Sciatic nerve (tissue), 2 donors: ENCODE measurements at regions of chr20 and their contacts with region 1.

Region 1: DNA sequence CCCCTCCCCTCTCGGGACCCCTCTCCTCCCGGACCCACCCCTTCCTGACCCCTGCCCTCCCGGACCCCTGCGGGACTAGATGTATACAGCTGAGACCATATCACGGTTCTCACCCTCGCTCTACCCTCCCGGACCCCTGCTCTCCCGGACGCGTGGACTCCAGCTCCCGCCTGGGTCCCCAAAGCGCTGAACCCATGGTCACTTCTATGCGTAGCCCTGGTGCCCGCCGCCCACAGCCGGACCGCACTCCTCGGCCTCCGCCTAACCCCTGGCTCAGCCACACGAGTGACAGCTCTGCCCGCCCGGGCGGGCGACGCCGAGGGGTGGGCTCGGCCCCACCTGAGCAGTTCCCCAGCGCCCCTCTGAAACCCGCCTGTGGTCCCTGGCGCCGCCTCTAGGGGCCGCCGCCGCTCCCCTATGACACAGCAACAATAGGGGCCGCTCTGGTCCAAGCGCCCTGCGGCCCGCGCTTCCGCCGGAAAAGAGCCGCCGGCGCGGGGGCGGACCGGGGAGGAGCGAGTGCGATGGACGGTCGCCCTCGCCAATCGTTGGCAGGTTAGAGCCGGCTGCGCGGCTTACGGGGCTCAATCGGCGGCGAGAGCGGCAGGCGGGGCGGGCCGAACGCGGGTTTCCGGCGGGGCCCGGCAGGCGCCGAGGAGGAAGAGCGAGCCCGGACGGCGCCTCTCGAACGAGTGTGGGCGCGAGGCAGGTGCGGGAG is at the start of gene ADRM1:
- DNase-seq: peak; percentile 97
- ATAC-seq: peak; percentile 94
- total RNA-seq, gene ADRM1: 47.5 TPM

Region 2: DNA sequence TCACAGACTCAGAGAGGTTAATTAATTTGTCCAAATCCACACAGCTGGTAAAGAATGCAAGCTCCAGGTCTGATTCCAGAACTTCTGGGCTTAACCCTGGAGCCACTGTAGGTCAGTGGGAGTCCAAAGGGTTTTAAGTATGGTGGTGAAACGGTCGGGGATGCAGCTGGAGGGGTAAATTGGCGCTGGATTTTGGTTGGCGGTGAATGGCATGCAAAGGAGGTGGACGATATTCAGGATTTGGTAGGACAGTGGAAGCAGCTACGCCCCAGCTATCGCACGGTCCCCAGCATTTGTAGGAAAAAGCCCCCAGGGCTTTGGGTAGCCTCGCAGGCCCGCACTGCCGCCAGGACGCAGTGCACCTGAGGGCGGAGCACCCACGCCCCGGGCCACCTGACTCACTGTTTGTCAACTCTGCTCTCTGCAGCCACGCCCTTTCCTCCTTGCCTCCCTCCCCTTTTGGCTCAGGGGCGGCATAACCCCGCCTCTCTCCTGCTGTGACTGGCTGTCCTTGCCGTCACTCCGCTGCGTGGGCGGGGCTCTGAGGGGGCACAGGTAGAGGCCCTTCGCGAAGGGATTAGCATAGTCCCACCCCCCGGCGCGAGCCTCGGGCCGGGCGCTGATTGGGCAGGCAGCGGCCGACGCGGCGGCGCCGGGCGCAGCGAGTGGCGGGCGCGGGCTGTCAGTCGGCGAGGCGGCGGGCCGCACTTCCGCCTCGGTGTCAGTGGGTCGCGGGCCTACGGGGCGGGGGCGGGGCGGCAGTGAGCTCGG is 64.5 kb before region 1 on chr20 and contains the start of gene OSBPL2:
- intact Hi-C with region 1: no loop called
- DNase-seq: peak; percentile 100
- ATAC-seq: peak; percentile 100
- total RNA-seq, gene OSBPL2: 53.3 TPM

Region 3: DNA sequence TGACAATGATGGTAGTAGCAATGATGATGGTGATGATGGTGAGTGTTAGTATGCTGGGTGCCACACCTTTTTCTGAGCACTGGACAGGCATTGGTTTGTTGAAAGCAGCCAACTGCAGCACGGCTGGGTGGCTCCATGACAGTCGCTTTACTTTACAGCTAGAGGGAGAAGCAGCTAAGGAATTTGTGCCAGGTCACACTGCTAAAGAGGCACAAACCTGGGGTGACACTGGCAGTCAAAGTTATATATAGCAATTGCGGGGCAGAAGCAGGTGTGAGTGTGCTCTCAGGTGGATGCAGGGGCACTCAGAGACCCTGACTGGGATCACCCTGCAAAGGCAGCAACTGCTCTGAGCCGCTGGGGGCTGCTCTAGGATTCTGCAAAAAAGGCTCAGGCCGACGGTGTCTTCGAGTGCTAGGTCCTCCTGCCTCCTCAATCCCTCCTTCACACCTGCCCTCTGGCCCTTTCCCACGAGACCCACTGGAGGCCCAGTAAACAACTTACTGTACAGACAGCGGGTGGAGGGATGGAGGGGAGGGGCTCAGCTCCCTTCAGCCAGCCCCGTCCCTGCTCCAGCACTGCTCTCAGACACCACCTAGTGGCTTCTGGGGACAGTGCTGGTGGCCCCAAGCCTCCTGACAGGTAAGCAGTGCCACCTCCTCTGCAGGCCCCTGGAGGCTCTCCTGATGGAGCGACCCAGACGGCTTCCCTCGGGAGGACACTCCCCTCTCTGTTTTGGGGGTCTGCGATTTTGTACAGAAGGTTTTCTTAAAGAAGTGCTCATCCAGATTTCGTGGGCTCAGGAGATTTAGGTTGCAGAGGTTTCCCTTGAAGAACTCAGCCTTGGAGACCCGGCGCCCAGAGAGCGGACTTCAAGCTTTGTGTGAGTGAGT is 80.1 kb after region 1 on chr20:
- intact Hi-C with region 1: loop called (anchors 5 kb)
- DNase-seq: peak; percentile 82
- ATAC-seq: peak; percentile 80